PC-3 (cell line): ENCODE measurements at regions of chr17 and their contacts with region 1.

Region 1: DNA sequence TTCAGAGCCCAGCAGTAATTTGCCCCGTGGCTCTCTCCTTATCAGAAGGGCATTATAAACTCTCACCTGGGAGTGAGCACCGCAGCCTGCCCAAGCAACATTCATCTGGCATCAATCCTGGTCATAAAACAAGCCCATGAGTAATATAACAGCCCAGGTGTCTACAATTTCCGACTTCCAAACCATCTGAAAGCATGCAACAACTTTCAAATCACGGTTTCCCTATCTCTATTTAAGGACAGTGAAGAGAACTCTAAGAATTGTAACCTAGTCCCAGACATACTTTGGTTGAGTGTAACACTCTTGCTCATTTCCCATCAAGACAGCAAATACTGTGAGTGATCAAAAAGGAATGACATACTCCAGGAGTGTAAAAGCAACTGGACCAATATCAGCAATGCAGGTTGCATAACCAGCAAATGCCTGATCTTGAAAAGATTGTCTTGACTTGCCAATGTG is 487.4 kb upstream of the SOX9 start:
- DNase-seq: peak; percentile 98
- ATAC-seq: peak; percentile 74
- H3K4me3 ChIP-seq: peak overlapping the region; percentile 32
- H3K27ac ChIP-seq: peak overlapping the region; percentile 62
- H3K4me1 ChIP-seq: peaks cover 41% of the 10 kb centered on the region
- H3K27me3 ChIP-seq: no peaks in the 10 kb centered on the region
- CTCF ChIP-seq: no peak

Region 2: DNA sequence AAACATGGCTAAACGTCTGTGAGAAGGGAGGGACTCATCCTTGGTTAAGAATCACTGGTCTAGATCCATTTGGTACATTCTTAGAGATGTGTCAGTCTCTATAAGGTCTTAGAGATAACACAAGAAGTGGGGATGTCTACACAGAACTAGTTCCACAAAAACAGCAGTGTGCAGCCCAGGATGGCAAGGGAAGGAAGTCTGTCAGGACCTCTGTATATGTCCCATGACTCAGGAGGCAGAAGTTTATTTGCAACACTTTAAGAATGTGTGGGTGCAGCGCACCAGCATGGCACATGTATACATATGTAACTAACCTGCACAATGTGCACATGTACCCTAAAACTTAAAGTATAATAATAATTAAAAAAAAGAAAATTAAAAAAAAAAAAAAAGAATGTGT is 61.1 kb before region 1 on chr17:
- CTCF ChIA-PET with region 1: no interaction called
- POLR2A ChIA-PET with region 1: interaction called, 3 read pairs
- intact Hi-C with region 1: loop called (anchors 2 kb)
- DNase-seq: peak; percentile 25
- ATAC-seq: peak; percentile 33
- H3K4me3 ChIP-seq: no peak overlapping the region
- H3K27ac ChIP-seq: no peak overlapping the region
- H3K4me1 ChIP-seq: 0 out of 2 replicates have a peak, but pooled peaks cover 3% of the 10 kb centered on the region
- H3K27me3 ChIP-seq: no peaks in the 10 kb centered on the region
- CTCF ChIP-seq: no peak

Region 3: DNA sequence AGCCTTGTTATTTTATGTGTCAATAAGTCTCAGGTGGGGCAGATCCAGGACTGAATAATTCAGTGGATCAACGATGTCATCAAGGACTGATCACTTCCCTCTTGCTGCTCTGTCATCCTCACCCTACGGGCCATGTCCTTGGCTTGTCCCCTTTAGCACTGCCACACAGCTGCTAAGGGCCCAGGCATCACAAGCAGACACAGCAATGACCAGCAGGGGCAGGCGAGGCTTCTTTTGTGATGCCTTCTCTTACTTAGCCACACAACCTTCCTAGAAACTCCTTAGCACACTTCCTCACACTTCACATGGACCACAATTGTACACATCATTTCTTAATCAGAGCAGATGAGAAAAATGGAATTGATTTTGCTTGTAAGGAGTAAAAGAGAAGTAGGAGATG is 131.1 kb after region 1 on chr17:
- CTCF ChIA-PET with region 1: no interaction called
- POLR2A ChIA-PET with region 1: no interaction called
- intact Hi-C with region 1: loop called (anchors 2 kb)
- DNase-seq: peak; percentile 53
- ATAC-seq: peak; percentile 62
- H3K4me3 ChIP-seq: no peak overlapping the region
- H3K27ac ChIP-seq: no peak overlapping the region
- H3K4me1 ChIP-seq: peaks cover 13% of the 10 kb centered on the region
- H3K27me3 ChIP-seq: no peaks in the 10 kb centered on the region
- CTCF ChIP-seq: peak; percentile 71

Region 4: GRCh38 chr17:71922439-71922838 is 289.0 kb after region 1 on chr17:
- CTCF ChIA-PET with region 1: no interaction called
- POLR2A ChIA-PET with region 1: no interaction called
- intact Hi-C with region 1: loop called (anchors 10 kb)
- DNase-seq: peak; percentile 98
- ATAC-seq: peak; percentile 78
- H3K4me3 ChIP-seq: no peak overlapping the region
- H3K27ac ChIP-seq: peak overlapping the region; percentile 81
- H3K4me1 ChIP-seq: peaks cover 50% of the 10 kb centered on the region
- H3K27me3 ChIP-seq: no peaks in the 10 kb centered on the region
- CTCF ChIP-seq: no peak